ENCODE measurements at regions of chr11 and their contacts with region 1.

Region 1: DNA sequence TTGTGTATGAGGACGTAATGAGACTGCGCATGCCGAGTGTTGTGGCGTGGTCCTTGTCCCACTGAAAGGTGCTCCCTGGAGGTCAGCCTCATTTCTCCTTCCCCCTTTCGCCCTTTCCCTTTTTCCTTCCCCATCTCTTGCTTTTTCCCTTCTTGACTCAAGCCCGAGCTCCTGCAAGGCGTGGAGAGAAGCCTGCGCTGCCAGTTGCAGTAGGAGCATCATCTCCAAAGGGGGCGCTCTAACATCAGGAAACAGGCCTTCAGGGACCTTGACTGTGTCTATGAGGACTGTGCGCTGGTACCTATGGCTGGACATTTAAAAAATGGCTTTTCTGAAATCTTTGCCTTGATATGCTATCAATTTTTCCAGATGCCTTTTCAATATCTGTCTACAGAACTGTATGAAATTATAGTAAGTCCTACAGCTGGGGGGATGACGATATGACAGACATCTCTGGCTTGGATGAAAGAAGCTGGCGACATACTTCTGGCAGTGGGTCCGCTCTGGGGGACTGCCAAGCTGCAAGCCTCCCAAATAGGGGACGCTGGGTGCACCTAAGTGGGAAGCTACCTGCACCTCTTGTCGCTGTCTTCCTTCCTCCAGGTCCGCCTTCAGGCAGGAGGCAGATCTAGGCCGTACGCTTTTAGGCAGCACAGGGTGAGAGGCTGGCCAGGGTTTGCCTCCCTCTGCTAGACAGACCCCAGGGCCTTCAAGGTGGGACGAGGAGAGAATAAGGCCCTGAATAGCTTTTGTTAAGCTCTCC is 96.5 kb downstream of the NXPE2 start:
- DNase-seq: peak; percentile 59 to 72 (median 69)
- ATAC-seq: peak; percentile 99
- H3K4me3 ChIP-seq: no peak overlapping the region
- H3K27ac ChIP-seq: no peak overlapping the region
- H3K4me1 ChIP-seq: no peaks in the 10 kb centered on the region; a peak in 1 of 5 replicates
- H3K27me3 ChIP-seq: peaks cover 0 to 6% of the 10 kb centered on the region in 2 experiments; a peak in 1 of 5 replicates
- CTCF ChIP-seq: peak; percentile 76 to 91 (median 85)
- EP300 ChIP-seq: no peak
- POLR2A ChIP-seq: no peak
- RAD21 ChIP-seq: peak; percentile 63 to 79

Region 2: GRCh38 chr11:114036156-114036811 is 738.5 kb before region 1 on chr11:
- CTCF ChIA-PET with region 1: no interaction called
- POLR2A ChIA-PET with region 1: no interaction called
- in situ Hi-C with region 1: loop called (anchors 25 kb)
- intact Hi-C with region 1: no loop called
- DNase-seq: peak; percentile 71 to 80 (median 76)
- ATAC-seq: peak; percentile 100
- H3K4me3 ChIP-seq: no peak overlapping the region
- H3K27ac ChIP-seq: no peak overlapping the region
- H3K4me1 ChIP-seq: peaks cover 0 to 6% of the 10 kb centered on the region in 2 experiments; a peak in 1 of 5 replicates
- H3K27me3 ChIP-seq: peaks cover 12 to 47% of the 10 kb centered on the region in 2 experiments
- CTCF ChIP-seq: peak; percentile 83 to 97 (median 88)
- EP300 ChIP-seq: no peak
- POLR2A ChIP-seq: no peak
- RAD21 ChIP-seq: peak; percentile 88 to 90

Region 3: DNA sequence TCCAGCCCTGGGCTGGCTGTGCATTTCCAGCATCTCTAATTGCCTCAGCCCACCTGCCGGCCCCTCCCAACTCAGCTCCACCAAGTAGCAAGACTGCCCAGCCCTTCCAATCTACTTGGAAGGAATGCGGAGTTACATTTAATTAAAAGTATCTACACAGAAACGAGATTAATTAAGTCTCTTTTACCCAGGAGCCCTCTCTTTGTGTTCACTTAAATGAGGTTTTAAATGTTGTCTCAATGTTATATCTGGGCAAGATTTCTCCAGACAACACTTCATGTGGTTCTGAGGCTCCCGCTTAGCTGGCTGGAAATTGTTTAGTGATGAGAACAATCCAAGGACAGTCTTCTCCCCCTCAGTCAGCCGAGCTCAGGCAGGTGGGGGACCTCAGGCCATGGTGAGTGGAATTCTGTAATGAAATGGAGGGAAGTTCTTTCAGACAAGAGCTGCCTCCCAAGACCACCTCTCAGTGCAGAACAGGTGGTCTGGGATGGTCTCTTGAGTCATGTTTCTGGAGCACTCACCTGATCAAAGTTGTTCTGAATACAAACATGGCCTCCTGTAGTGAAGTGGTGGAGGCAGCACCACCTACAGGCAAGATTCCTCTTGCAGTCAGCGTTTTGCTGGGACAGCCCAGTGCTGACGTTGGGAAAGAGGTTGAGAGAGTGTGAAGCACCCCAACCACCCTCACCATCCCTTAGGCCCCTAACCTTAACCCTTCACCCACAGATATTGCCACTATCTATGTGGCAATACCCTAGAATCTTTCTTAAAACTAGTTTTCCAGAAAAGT is 357.9 kb after region 1 on chr11:
- CTCF ChIA-PET with region 1: no interaction called
- POLR2A ChIA-PET with region 1: no interaction called
- in situ Hi-C with region 1: no loop called
- intact Hi-C with region 1: loop called (anchors 10 kb)
- DNase-seq: peak; percentile 15 to 21 (median 18)
- ATAC-seq: peak; percentile 83
- H3K4me3 ChIP-seq: no peak overlapping the region
- H3K27ac ChIP-seq: no peak overlapping the region
- H3K4me1 ChIP-seq: no peaks in the 10 kb centered on the region
- H3K27me3 ChIP-seq: no peaks in the 10 kb centered on the region
- CTCF ChIP-seq: peak; percentile 24 to 56 (median 51); a peak in 5 of 6 replicates
- EP300 ChIP-seq: no peak
- POLR2A ChIP-seq: no peak
- RAD21 ChIP-seq: no peak

Region 4: GRCh38 chr11:115324581-115325432 is 550.0 kb after region 1 on chr11:
- CTCF ChIA-PET with region 1: no interaction called
- POLR2A ChIA-PET with region 1: no interaction called
- in situ Hi-C with region 1: no loop called
- intact Hi-C with region 1: loop called (anchors 5 kb)
- DNase-seq: peak; percentile 34 to 49 (median 44)
- ATAC-seq: peak; percentile 92
- H3K4me3 ChIP-seq: no peak overlapping the region
- H3K27ac ChIP-seq: no peak overlapping the region
- H3K4me1 ChIP-seq: no peaks in the 10 kb centered on the region
- H3K27me3 ChIP-seq: no peaks in the 10 kb centered on the region
- CTCF ChIP-seq: peak; percentile 65 to 85 (median 70)
- EP300 ChIP-seq: no peak
- POLR2A ChIP-seq: no peak
- RAD21 ChIP-seq: peak; percentile 72 to 74

Measured in K562 (cell line).